Calu3 (cell line): ENCODE measurements at regions of chr20 and their contacts with region 1.

Region 1: DNA sequence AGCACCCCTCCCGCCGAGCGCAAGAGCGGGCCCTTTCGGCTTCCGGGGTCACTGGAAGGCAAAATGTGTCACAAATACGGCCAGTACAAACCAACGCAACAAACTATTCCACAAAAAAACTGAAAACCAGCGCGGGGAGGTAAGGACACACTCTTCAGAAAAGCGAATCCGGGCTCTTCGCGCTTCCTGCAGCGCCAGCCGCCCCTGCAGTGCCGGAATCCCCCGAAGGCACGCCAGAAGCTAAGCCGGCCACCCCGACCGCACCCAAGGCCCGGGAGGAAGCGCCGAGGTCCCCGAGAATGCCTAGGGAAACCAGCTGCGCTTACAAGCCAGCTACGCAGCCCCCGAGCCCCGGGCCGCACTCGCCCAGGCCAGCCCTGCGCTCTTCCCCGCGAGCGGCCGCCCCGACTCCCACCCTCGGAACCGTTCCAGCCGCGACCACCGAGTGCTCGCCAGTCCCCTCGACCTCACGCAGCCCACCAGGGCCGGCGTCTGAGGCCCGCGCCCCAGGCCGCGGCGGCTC is 528 bp downstream of the DIDO1 start:
- DNase-seq: peak; percentile 65
- H3K4me3 Mint-ChIP-seq: peak overlapping the region; percentile 94
- H3K27ac Mint-ChIP-seq: peak overlapping the region; percentile 97
- H3K4me1 Mint-ChIP-seq: peaks cover 59% of the 10 kb centered on the region
- H3K27me3 Mint-ChIP-seq: no peaks in the 10 kb centered on the region
- CTCF ChIP-seq: no peak

Region 2: DNA sequence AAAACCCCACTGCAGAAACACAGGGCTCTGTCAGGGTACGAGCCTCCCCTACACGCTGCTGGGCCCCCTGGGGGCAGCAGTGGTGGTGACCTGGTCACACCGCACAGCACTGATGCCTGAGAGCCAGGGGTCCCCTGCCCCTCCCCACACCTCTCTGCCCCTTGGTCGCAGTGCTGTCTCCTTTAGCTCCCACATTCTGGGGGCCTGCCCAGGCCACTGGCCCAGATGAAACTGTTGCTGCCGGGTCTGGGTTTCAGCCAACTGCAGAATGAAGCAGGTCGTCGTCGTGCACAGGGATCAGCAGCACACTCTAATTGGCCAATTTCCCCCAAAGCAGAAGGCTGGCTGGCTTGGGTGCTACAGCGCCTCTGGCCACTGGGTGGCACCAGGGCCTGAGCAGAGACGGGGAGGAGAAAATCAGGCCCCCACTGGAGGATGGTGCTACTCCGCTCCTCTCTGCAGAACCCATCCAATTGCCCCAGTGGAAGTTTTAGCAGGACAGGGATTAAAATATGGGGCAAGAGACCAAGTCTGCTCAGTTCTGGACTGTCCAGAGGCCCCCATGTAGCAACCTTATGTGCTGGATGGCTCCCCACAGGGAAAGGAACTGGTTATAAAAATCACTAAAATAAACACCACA is 25.6 kb before region 1 on chr20:
- CTCF ChIA-PET with region 1: interaction called, 5 read pairs
- intact Hi-C with region 1: loop called (anchors 2 kb)
- DNase-seq: peak; percentile 87
- H3K4me3 Mint-ChIP-seq: peak overlapping the region; percentile 18
- H3K27ac Mint-ChIP-seq: peak overlapping the region; percentile 82
- H3K4me1 Mint-ChIP-seq: peaks cover 19% of the 10 kb centered on the region
- H3K27me3 Mint-ChIP-seq: no peaks in the 10 kb centered on the region
- CTCF ChIP-seq: peak; percentile 95